Caco-2 (cell line): ENCODE measurements at regions of chr12 and their contacts with region 1.

Region 1: GRCh38 chr12:82527165-82527780 is 159.4 kb upstream of the TMTC2 start:
- DNase-seq: peak in 1 of 2 experiments; percentile 58
- H3K4me3 ChIP-seq: no peak overlapping the region
- H3K4me3 Mint-ChIP-seq: no peak overlapping the region
- H3K27ac Mint-ChIP-seq: no peak overlapping the region
- H3K4me1 ChIP-seq: peaks cover 9% of the 10 kb centered on the region
- H3K4me1 Mint-ChIP-seq: peaks cover 9% of the 10 kb centered on the region
- H3K27me3 ChIP-seq: no peaks in the 10 kb centered on the region
- H3K27me3 Mint-ChIP-seq: peaks cover 2% of the 10 kb centered on the region
- CTCF ChIP-seq: peak; percentile 81 to 84

Region 2: GRCh38 chr12:82608706-82609105 is 81.4 kb after region 1 on chr12:
- CTCF ChIA-PET with region 1: no interaction called
- POLR2A ChIA-PET with region 1: no interaction called
- intact Hi-C with region 1: no loop called
- DNase-seq: no peak
- H3K4me3 ChIP-seq: no peak overlapping the region
- H3K4me3 Mint-ChIP-seq: no peak overlapping the region
- H3K27ac Mint-ChIP-seq: no peak overlapping the region
- H3K4me1 ChIP-seq: no peaks in the 10 kb centered on the region
- H3K4me1 Mint-ChIP-seq: no peaks in the 10 kb centered on the region
- H3K27me3 ChIP-seq: no peaks in the 10 kb centered on the region
- H3K27me3 Mint-ChIP-seq: no peaks in the 10 kb centered on the region
- CTCF ChIP-seq: no peak

Region 3: DNA sequence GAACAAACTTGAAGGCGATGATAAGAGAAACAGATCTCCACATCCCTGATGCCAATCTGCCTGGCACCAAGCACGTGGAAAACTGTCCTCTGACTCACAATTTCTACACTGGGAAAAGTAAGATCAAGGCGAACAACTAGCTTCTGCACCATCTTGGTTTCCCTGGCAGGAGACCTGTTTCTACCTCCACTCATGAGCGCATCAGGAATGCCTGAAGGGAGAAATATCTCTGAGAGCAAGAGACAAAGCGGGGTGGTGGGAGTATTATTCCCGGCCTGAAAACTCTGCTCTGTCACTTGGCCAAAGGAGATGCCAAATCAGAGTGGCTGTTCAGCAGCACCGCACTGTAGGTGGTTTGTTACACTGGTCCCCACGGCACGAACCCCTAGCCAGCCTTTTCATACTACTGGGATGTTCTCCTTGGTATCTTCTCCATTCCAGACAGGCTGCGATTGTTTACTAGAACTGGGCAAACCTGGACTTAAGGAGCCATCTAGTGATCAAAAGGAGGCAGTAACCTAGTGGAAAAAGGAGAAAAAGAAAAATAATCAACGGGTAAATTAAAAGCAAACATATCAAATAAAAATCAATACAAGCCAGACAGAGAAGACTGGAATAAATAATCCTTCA is 100.4 kb after region 1 on chr12:
- CTCF ChIA-PET with region 1: no interaction called
- POLR2A ChIA-PET with region 1: no interaction called
- intact Hi-C with region 1: loop called (anchors 1 kb)
- DNase-seq: peak in 1 of 2 experiments; percentile 30
- H3K4me3 ChIP-seq: no peak overlapping the region
- H3K4me3 Mint-ChIP-seq: no peak overlapping the region
- H3K27ac Mint-ChIP-seq: no peak overlapping the region
- H3K4me1 ChIP-seq: no peaks in the 10 kb centered on the region
- H3K4me1 Mint-ChIP-seq: no peaks in the 10 kb centered on the region
- H3K27me3 ChIP-seq: no peaks in the 10 kb centered on the region
- H3K27me3 Mint-ChIP-seq: peaks cover 7% of the 10 kb centered on the region
- CTCF ChIP-seq: peak; percentile 51 to 54